MCF 10A (cell line): ENCODE measurements at regions of chr7 and their contacts with region 1.

Region 1: DNA sequence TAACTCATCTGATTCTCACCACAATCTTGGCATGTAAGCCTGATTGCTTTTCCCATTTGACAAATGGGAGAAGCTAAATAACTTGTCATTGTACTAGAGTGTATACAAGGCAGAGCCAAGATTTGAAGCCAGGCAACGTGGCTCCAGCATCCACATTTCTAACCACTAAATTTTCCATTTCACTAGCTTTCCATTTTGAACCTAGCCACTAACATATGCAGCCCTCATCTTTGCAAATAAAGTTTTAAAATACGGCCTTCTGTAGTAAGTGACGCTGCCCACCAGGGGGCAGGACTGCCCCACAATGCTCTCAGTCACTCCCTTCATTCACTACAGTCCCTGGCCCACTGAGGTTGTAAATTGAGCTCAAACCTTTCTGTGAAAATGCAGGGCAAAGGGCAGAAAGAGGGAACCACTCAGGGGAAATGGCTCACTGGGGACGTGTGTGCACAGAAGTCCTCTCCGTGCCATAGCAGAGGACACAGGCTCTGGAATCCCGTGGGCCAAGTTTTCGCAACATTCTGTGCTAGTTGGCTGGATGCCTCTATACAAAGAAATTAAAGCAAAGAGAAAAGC is 315.7 kb downstream of the TNS3 start:
- DNase-seq: peak; percentile 75
- H3K4me3 Mint-ChIP-seq: no peak overlapping the region
- H3K27ac Mint-ChIP-seq: no peak overlapping the region
- H3K4me1 Mint-ChIP-seq: peaks cover 11% of the 10 kb centered on the region
- H3K27me3 Mint-ChIP-seq: no peaks in the 10 kb centered on the region
- CTCF ChIP-seq: peak; percentile 88

Region 2: GRCh38 chr7:47244692-47245091 is 21.5 kb before region 1 on chr7:
- CTCF ChIA-PET with region 1: interaction called, 11 read pairs
- POLR2A ChIA-PET with region 1: interaction called, 3 read pairs
- intact Hi-C with region 1: no loop called
- DNase-seq: no peak
- H3K4me3 Mint-ChIP-seq: no peak overlapping the region
- H3K27ac Mint-ChIP-seq: no peak overlapping the region
- H3K4me1 Mint-ChIP-seq: no peaks in the 10 kb centered on the region
- H3K27me3 Mint-ChIP-seq: no peaks in the 10 kb centered on the region
- CTCF ChIP-seq: no peak

Region 3: DNA sequence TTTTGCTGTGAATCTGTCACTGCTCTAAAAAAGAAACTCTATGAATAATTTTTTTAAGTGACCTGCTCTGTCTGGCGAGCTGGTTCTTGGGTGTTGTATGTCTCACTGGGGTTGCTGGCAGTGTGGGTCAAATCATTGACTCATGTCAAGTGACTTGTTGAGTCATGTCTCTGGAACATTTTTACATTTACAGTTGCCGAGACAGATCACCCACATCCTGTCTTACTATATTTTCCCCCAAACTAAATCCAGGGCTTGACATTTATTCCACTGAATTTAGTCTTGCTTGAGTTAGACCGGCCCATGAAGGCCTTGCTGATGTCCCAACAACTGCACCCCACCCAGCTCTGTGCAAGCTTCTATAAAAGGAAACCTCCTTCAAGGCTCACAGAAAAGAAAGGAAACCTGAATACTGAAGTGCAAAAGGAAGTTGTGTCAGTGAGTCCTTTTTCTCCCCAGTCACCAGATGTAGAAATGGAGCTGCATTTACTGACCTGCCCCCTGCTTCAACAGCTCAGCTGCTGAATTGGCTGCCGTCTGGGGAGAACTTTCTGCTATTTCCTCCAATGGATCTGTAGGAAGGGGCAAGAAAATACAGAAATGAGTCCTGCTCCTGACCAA is 25.4 kb after region 1 on chr7:
- CTCF ChIA-PET with region 1: interaction called, 20 read pairs
- POLR2A ChIA-PET with region 1: interaction called, 4 read pairs
- intact Hi-C with region 1: no loop called
- DNase-seq: peak; percentile 94
- H3K4me3 Mint-ChIP-seq: peak overlapping the region; percentile 48
- H3K27ac Mint-ChIP-seq: peak overlapping the region; percentile 95
- H3K4me1 Mint-ChIP-seq: peaks cover 41% of the 10 kb centered on the region
- H3K27me3 Mint-ChIP-seq: no peaks in the 10 kb centered on the region
- CTCF ChIP-seq: no peak

Region 4: GRCh38 chr7:47428092-47428767 is 162.0 kb after region 1 on chr7:
- CTCF ChIA-PET with region 1: interaction called, 37 read pairs
- POLR2A ChIA-PET with region 1: no interaction called
- intact Hi-C with region 1: no loop called
- DNase-seq: no peak
- H3K4me3 Mint-ChIP-seq: no peak overlapping the region
- H3K27ac Mint-ChIP-seq: no peak overlapping the region
- H3K4me1 Mint-ChIP-seq: no peaks in the 10 kb centered on the region
- H3K27me3 Mint-ChIP-seq: no peaks in the 10 kb centered on the region
- CTCF ChIP-seq: no peak

Region 5: GRCh38 chr7:47581806-47582763 is 315.9 kb after region 1 on chr7 and contains the start of gene TNS3:
- CTCF ChIA-PET with region 1: interaction called, 3 read pairs
- POLR2A ChIA-PET with region 1: no interaction called
- intact Hi-C with region 1: loop called (anchors 1 kb)
- DNase-seq: no peak
- H3K4me3 Mint-ChIP-seq: peak within 1 kb of the TSS; percentile 94
- H3K27ac Mint-ChIP-seq: peak within 1 kb of the TSS; percentile 92
- H3K4me1 Mint-ChIP-seq: peaks cover 35% of the 10 kb centered on the region
- H3K27me3 Mint-ChIP-seq: no peaks in the 10 kb centered on the region
- CTCF ChIP-seq: peak; percentile 15
- total RNA-seq, gene TNS3: 30.1 and 33.3 TPM in 2 replicates

Region 6: DNA sequence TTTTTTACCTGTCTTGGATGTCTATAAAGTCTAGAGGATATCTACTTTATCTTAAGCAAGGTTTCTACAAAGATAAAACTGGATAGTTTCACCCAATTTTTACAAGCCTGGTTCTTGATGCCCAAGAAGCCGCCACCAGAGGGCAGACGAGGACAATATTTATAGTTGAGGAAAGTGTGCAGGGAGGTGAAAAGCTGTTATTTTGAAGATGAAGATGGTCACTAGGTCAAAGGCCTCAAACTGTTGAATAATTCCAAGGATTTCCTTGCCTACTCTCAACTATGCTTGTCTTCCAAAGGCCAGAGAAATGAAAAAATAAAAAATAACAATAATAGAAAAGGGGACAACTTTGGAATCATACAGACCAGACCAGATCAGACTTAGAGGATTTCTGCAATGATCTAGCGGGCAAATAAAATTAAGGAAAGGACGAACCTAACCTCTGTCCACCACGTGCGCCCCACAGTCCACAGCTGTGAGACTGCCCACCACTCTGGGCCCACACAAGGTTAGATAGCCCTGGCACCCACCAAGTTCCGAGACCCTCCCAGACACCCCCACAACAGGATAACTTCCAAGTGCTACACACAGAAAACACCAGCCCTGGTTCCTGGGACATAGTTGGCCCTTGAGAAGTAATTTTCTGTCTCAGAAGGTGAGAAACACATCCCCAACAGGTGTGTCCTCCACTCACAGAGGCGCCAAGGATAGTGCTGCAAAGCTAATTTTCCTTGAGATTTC is 679.2 kb after region 1 on chr7:
- CTCF ChIA-PET with region 1: interaction called, 11 read pairs
- POLR2A ChIA-PET with region 1: no interaction called
- intact Hi-C with region 1: no loop called
- DNase-seq: peak; percentile 77
- H3K4me3 Mint-ChIP-seq: no peak overlapping the region
- H3K27ac Mint-ChIP-seq: no peak overlapping the region
- H3K4me1 Mint-ChIP-seq: peaks cover 11% of the 10 kb centered on the region
- H3K27me3 Mint-ChIP-seq: no peaks in the 10 kb centered on the region
- CTCF ChIP-seq: peak; percentile 71